ENCODE measurements at regions of chr6 and their contacts with region 1.

Region 1: GRCh38 chr6:108896111-108896661 is 48.0 kb downstream of the ARMC2 start:
- DNase-seq: no peak
- ATAC-seq: peak; percentile 45 to 75

Region 2: GRCh38 chr6:108877046-108877751 is 19.0 kb before region 1 on chr6:
- intact Hi-C with region 1: loop called in 1 of 2 experiments (anchors 2 kb)
- DNase-seq: peak; percentile 86
- ATAC-seq: peak; percentile 83 to 87

Measured in left cardiac atrium (tissue), 4 donors.